Activated T-helper 2 cell treated with anti-CD3 and anti-CD28 coated beads, Interferon-gamma antibody, Interleukin-2, Interleukin-4, amounts not matched to agents 10 μg/mL and 5 μg/mL and 100 μg/mL, durations not matched to agents 14 hours and 24 hours and 36 hours (primary cell): ENCODE measurements at regions of chr5 and their contacts with region 1.

Region 1: DNA sequence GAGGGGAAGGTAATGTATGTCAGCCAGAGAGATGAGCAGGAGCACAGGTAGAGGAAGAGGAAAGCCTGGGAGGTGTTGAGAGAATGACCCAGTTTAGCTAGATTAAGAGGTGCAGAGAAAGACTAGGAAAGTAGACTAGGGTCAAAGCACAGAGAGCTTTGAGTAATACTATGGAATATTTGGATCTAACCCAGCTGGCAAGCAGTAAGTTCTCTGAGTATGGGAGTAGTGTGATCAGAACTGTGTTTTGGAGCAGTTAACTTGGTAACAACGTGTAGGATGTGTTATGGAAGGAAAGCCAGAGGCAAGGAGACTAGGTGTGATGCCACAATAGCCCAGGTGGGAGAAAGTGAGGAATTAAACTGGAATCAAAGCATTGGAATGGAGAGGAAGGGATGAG is 84.9 kb upstream of the PTGER4 start:
- DNase-seq: no peak
- H3K4me3 Mint-ChIP-seq: no peak overlapping the region
- H3K27ac Mint-ChIP-seq: no peak overlapping the region
- H3K4me1 Mint-ChIP-seq: peaks cover 30% of the 10 kb centered on the region
- H3K27me3 Mint-ChIP-seq: peaks cover 3% of the 10 kb centered on the region

Region 2: GRCh38 chr5:40321514-40321913 is 273.3 kb before region 1 on chr5:
- intact Hi-C with region 1: no loop called
- DNase-seq: no peak
- H3K4me3 Mint-ChIP-seq: no peak overlapping the region
- H3K27ac Mint-ChIP-seq: no peak overlapping the region
- H3K4me1 Mint-ChIP-seq: peaks cover 14% of the 10 kb centered on the region
- H3K27me3 Mint-ChIP-seq: no peaks in the 10 kb centered on the region

Region 3: GRCh38 chr5:40547994-40548575 is 46.7 kb before region 1 on chr5:
- intact Hi-C with region 1: no loop called
- DNase-seq: no peak
- H3K4me3 Mint-ChIP-seq: no peak overlapping the region
- H3K27ac Mint-ChIP-seq: no peak overlapping the region
- H3K4me1 Mint-ChIP-seq: peaks cover 2% of the 10 kb centered on the region
- H3K27me3 Mint-ChIP-seq: no peaks in the 10 kb centered on the region

Region 4: GRCh38 chr5:40570408-40571129 is 24.2 kb before region 1 on chr5:
- intact Hi-C with region 1: no loop called
- DNase-seq: no peak
- H3K4me3 Mint-ChIP-seq: no peak overlapping the region
- H3K27ac Mint-ChIP-seq: no peak overlapping the region
- H3K4me1 Mint-ChIP-seq: peaks cover 18% of the 10 kb centered on the region
- H3K27me3 Mint-ChIP-seq: no peaks in the 10 kb centered on the region

Region 5: GRCh38 chr5:40646286-40646685 is 51.5 kb after region 1 on chr5:
- intact Hi-C with region 1: loop called (anchors 1 kb)
- DNase-seq: no peak
- H3K4me3 Mint-ChIP-seq: no peak overlapping the region
- H3K27ac Mint-ChIP-seq: no peak overlapping the region
- H3K4me1 Mint-ChIP-seq: peaks cover 31% of the 10 kb centered on the region
- H3K27me3 Mint-ChIP-seq: no peaks in the 10 kb centered on the region

Region 6: GRCh38 chr5:40652441-40653220 is 57.8 kb after region 1 on chr5:
- intact Hi-C with region 1: loop called (anchors 2 kb)
- DNase-seq: no peak
- H3K4me3 Mint-ChIP-seq: peak overlapping the region; percentile 83
- H3K27ac Mint-ChIP-seq: peak overlapping the region; percentile 72
- H3K4me1 Mint-ChIP-seq: peaks cover 75% of the 10 kb centered on the region
- H3K27me3 Mint-ChIP-seq: no peaks in the 10 kb centered on the region

Region 7: DNA sequence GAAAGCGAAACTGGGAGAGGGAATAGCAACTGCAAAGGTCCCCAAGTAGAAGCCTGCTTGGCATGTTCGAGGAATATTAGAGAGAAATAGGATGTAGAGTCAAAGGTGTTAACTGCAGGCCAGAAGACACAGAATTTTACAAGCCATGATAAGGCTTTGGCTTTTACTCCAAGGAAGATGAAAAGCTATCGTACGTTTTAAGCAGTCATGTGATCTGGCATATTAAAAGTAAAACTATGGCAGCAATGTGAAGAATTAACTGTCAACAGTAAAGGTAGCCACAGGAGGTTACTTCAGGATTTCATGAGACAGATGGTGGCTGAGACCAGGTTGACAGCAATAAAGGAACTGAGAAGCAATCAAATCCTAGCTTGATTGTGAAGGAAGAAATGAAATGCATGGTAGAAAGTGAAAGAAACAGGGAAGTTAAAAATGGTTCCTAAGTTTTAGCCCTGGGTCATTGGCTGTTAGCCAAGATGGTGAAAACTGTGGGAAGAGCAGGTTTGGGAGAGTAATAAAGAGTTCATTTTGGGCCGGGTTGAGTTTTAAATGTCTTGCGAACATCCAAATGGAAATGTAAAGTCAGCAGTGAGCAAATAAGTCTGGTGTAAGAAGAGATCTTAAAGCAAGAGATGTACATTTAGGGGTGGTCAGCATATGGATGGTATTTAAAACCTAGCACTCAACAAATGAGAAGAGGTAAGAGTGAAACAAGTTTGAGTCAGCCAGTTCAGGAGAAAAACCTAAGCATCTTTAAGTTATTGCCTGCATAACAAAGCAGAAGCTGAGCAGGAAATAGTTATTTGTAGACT is 181.2 kb after region 1 on chr5:
- intact Hi-C with region 1: no loop called
- DNase-seq: no peak
- H3K4me3 Mint-ChIP-seq: no peak overlapping the region
- H3K27ac Mint-ChIP-seq: peak overlapping the region; percentile 51
- H3K4me1 Mint-ChIP-seq: peaks cover 17% of the 10 kb centered on the region
- H3K27me3 Mint-ChIP-seq: no peaks in the 10 kb centered on the region